ENCODE measurements at regions of chr5 and their contacts with region 1.

Region 1: GRCh38 chr5:77367733-77368132 is 124.4 kb downstream of the WDR41 start:
- DNase-seq: peak in 1 of 2 donors; percentile 73
- H3K4me3 ChIP-seq: no peak overlapping the region
- H3K27ac ChIP-seq: peak overlapping the region in 1 of 2 donors; percentile 58
- H3K4me1 ChIP-seq: peaks cover 0 to 40% (median 2%) of the 10 kb centered on the region in 4 donors
- H3K27me3 ChIP-seq: no peaks in the 10 kb centered on the region
- CTCF ChIP-seq: no peak

Region 2: DNA sequence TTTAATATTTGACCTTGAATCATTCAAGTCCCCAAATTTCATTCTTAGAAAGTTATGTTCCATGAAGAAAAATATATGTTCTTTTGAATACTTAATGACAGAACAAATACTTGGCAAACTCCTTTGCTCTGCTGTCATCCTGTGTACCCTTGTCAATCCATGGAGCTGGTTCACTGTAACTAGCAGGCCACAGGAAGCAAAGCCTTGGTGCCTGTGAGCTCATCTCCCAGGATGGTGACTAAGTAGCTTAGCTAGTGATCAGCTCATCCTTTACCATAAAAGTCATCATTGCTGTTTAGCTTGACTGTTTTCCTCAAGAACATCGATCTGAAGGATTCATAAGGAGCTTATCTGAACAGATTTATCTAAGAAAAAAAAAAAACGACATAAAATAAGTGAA is 58.9 kb after region 1 on chr5:
- intact Hi-C with region 1: loop called (anchors 10 kb)
- DNase-seq: no peak
- H3K4me3 ChIP-seq: no peak overlapping the region
- H3K27ac ChIP-seq: peak overlapping the region; percentile 61 to 64
- H3K4me1 ChIP-seq: peaks cover 0 to 76% (median 28%) of the 10 kb centered on the region in 4 donors
- H3K27me3 ChIP-seq: no peaks in the 10 kb centered on the region
- CTCF ChIP-seq: no peak